Activated CD4-positive, alpha-beta memory T cell treated with anti-CD3 and anti-CD28 coated beads for 36 hours (primary cell): ENCODE measurements at regions of chr14 and their contacts with region 1.

Region 1: GRCh38 chr14:91980127-91980741 is 32.7 kb upstream of the FBLN5 start:
- DNase-seq: no peak
- H3K4me3 Mint-ChIP-seq: no peak overlapping the region
- H3K27ac Mint-ChIP-seq: no peak overlapping the region
- H3K4me1 Mint-ChIP-seq: peaks cover 42% of the 10 kb centered on the region
- H3K27me3 Mint-ChIP-seq: no peaks in the 10 kb centered on the region

Region 2: DNA sequence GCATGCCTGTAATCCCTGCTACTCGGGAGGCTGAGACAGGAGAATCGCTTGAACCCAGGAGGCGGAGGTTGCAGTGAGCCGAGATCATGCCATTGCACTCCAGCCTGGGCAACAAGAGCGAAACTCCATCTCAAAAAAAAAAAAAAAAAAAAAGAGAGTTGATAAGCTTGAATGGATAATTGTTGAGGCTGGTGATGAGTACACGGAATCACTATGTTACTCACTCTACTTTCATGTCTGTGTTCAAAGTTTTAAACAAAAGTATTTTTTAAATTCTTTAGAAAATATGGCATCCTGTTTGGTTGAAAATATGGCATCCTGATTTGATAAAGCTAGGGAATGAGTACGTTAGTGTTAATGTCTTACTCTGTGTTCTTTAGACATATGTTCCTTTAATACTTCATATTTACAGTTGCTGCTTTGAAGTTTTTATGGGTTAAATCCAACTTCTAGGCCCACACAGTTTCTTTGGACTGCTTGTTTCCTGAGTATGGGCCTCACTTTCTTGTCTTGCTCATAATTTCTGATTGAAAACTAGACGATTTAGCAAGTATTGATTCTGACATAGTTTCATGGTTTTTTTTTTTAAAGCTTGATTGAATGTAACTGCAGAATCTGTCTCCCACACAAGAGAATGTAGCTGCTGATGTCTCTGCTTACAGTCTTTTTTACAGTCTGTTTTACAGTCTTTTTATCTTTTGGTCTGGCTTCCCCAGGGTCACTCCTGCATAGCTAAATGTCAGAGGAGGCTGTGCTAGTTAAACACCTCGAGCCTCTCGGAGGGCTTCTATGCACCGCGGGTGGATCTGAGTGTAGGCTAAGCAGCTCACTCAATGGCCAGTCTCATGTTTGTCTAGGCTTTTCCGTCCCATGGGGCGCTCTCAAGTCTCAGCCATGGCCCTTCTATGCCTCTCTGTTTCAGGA is 18.7 kb before region 1 on chr14:
- CTCF ChIA-PET with region 1: interaction called, 4 read pairs
- POLR2A ChIA-PET with region 1: interaction called, 5 read pairs
- intact Hi-C with region 1: loop called (anchors 1 kb)
- DNase-seq: no peak
- H3K4me3 Mint-ChIP-seq: no peak overlapping the region
- H3K27ac Mint-ChIP-seq: peak overlapping the region; percentile 83
- H3K4me1 Mint-ChIP-seq: peaks cover 18% of the 10 kb centered on the region
- H3K27me3 Mint-ChIP-seq: peaks cover 2% of the 10 kb centered on the region

Region 3: GRCh38 chr14:91968280-91968679 is 12.0 kb before region 1 on chr14:
- CTCF ChIA-PET with region 1: interaction called, 4 read pairs
- POLR2A ChIA-PET with region 1: interaction called, 4 read pairs
- intact Hi-C with region 1: loop called (anchors 1 kb)
- DNase-seq: peak; percentile 58
- H3K4me3 Mint-ChIP-seq: no peak overlapping the region
- H3K27ac Mint-ChIP-seq: no peak overlapping the region
- H3K4me1 Mint-ChIP-seq: peaks cover 16% of the 10 kb centered on the region
- H3K27me3 Mint-ChIP-seq: no peaks in the 10 kb centered on the region

Region 4: GRCh38 chr14:92004062-92004461 is 23.8 kb after region 1 on chr14:
- CTCF ChIA-PET with region 1: interaction called, 4 read pairs
- POLR2A ChIA-PET with region 1: no interaction called
- intact Hi-C with region 1: loop called (anchors 1 kb)
- DNase-seq: no peak
- H3K4me3 Mint-ChIP-seq: no peak overlapping the region
- H3K27ac Mint-ChIP-seq: no peak overlapping the region
- H3K4me1 Mint-ChIP-seq: peaks cover 47% of the 10 kb centered on the region
- H3K27me3 Mint-ChIP-seq: no peaks in the 10 kb centered on the region